T-cell (primary cell): ENCODE measurements at regions of chr10 and their contacts with region 1.

Region 1: DNA sequence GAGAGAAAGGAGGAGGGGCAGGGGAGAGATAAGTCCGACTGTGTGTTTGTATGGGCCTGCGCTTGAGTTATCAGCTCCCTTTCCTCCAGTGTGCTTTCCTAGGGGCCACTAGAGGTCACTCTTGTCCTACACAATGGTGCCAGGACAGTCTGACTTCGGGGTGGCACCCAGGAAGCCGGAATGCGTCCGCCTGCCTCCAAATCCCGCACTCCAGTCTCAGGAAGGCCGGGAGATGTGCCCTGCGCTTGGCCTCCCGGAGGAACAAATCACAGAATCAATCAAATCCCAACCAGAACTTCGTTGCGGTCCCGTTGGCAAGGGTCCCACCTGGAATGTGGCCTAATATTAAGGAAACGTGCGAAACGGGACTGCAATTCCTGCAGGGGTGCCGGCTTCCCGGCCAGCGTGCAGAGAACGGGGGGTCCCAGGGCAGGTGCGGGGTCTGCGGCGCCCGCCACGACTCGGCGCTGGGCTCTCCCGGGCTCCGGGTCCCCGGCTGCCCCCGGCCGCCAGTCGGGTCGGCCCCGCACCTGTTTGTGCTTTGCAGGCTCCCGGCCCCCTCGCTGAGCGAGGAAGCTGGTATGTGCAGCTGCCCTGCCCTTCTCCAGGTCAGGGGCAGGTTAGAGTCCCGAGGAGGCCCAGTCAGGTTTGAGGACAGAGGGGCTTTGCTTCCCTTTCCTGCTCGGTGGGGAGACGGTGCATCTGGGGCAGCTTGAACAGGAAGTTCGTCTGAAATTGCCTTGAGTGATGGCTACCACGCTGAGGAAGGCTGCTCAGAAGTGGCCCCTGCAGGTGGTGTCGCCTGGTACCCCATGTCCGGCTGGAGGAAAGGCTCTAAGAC is 21.0 kb upstream of the HPS1 start:
- DNase-seq: peak; percentile 28 to 90 (median 52)
- ATAC-seq: peak; percentile 87 to 96 (median 92)
- H3K4me3 ChIP-seq: peak overlapping the region; percentile 66 to 95
- H3K4me3 Mint-ChIP-seq: peak overlapping the region; percentile 89 to 97 (median 90)
- H3K27ac ChIP-seq: peak overlapping the region; percentile 40
- H3K27ac Mint-ChIP-seq: peak overlapping the region; percentile 85 to 88
- H3K4me1 ChIP-seq: peaks cover 0 to 11% of the 10 kb centered on the region in 2 experiments
- H3K4me1 Mint-ChIP-seq: peaks cover 4 to 13% (median 7%) of the 10 kb centered on the region in 3 donors
- H3K27me3 ChIP-seq: peaks cover 0 to 2% of the 10 kb centered on the region in 2 experiments
- H3K27me3 Mint-ChIP-seq: peaks cover 9 to 14% of the 10 kb centered on the region in 2 donors

Region 2: DNA sequence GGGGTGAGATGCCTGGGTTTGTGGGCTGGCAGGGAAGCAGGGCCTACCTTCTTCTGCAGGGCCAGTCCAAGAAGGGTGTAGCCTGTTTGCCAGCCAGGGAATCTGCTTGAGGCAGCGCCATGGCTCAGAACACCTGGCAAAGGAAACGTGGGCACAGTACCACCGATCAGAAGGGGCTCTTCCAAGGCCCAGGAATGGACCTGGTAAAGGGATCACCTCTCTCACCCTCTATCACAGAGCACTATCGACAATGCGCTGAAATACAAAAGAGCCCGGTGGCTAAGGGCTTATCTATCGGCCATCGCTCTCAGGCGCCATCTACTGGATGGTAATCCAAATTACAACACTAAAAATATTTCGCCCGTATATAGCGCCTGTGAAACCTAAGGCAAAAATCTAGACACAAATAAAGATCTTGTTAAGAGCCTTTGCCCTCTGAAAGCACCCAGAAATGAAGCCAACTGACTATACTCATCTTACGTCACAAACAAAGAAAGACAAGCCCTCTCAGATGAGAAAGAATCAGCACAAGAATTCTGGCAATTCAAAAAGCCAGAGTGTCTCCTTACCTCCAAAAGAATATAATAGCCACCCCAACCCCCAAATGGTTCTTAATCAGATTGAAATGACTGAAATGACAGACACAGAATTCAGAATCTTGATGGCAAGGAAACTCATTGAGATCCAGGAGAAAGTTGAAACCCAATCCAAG is 196.8 kb after region 1 on chr10:
- CTCF ChIA-PET with region 1: interaction called in 1 of 2 experiments, 10 read pairs
- POLR2A ChIA-PET with region 1: no interaction called
- DNase-seq: peak in 26 of 35 experiments; percentile 3 to 65 (median 8)
- ATAC-seq: peak in 2 of 4 experiments; percentile 38 to 55
- H3K4me3 ChIP-seq: no peak overlapping the region
- H3K4me3 Mint-ChIP-seq: no peak overlapping the region
- H3K27ac ChIP-seq: no peak overlapping the region
- H3K27ac Mint-ChIP-seq: no peak overlapping the region
- H3K4me1 ChIP-seq: peaks cover 0 to 3% of the 10 kb centered on the region in 2 experiments
- H3K4me1 Mint-ChIP-seq: no peaks in the 10 kb centered on the region
- H3K27me3 ChIP-seq: no peaks in the 10 kb centered on the region
- H3K27me3 Mint-ChIP-seq: peaks cover 6 to 14% of the 10 kb centered on the region in 2 donors

Region 3: GRCh38 chr10:99248824-99249223 is 781.1 kb after region 1 on chr10:
- CTCF ChIA-PET with region 1: interaction called, 6 to 59 read pairs
- POLR2A ChIA-PET with region 1: no interaction called
- DNase-seq: no peak
- ATAC-seq: no peak
- H3K4me3 ChIP-seq: no peak overlapping the region
- H3K4me3 Mint-ChIP-seq: no peak overlapping the region
- H3K27ac ChIP-seq: no peak overlapping the region
- H3K27ac Mint-ChIP-seq: no peak overlapping the region
- H3K4me1 ChIP-seq: no peaks in the 10 kb centered on the region
- H3K4me1 Mint-ChIP-seq: no peaks in the 10 kb centered on the region
- H3K27me3 ChIP-seq: peaks cover 0 to 7% of the 10 kb centered on the region in 2 experiments
- H3K27me3 Mint-ChIP-seq: peaks cover 33 to 38% of the 10 kb centered on the region in 2 donors